ENCODE measurements at regions of chr12 and their contacts with region 1.

Region 1: DNA sequence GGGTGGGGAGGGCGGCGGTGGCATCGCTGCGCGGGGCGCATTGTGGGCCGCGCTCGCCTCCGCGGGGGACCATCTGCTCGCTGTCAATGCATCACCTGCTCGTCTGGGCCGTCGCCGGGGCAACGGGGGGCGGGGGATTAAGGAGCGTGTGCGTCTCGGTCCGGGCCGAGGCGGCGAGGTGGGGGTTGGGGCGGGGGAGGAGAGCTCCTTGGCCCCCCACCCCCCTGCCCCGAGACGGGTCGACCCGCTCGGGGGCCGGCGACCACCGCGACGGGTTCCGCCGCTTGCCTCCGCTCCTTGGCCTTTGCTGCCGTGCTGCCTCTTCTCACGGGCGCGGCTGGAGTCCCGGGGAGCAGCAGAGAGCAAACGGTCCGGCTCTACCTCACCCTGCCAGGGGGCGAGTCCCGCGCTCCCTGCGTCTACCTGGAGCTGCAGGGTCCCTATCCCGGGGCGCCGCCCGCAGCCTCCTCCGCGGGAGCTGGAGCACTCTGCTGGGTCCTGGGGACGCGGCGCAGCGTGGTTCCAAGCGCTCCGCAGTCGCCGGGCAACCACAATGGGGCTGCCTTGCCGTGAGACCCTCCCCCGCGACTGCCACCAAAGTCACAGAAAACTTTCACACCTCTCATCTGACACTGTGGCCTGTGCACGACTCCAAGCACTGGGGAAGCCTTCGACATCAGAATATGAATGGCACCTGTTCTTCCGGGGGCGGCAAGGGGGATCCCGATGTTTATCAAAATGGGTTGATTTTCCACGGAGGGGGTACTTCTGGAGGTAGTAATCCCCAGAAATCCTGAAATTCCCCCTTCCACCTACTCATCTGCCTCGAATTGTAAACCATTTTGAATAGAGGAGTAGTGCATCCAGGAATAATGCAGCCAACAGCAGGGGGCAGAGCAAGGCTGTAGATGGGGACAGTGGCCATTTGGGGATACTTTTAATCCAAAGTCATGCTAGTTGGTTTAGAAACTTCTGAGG is at the start of gene C12orf42:
- DNase-seq: peak; percentile 77
- H3K4me3 Mint-ChIP-seq: peak within 1 kb of the TSS; percentile 57
- H3K27ac Mint-ChIP-seq: no peak within 1 kb of the TSS
- H3K4me1 Mint-ChIP-seq: peaks cover 29% of the 10 kb centered on the region
- H3K27me3 Mint-ChIP-seq: peaks cover 34% of the 10 kb centered on the region
- total RNA-seq, gene C12orf42: not detected

Region 2: GRCh38 chr12:102879144-102879763 is 616.5 kb before region 1 on chr12:
- CTCF ChIA-PET with region 1: no interaction called
- intact Hi-C with region 1: loop called (anchors 1 kb)
- DNase-seq: peak; percentile 51
- H3K4me3 Mint-ChIP-seq: no peak overlapping the region
- H3K27ac Mint-ChIP-seq: no peak overlapping the region
- H3K4me1 Mint-ChIP-seq: no peaks in the 10 kb centered on the region
- H3K27me3 Mint-ChIP-seq: peaks cover 13% of the 10 kb centered on the region

Region 3: GRCh38 chr12:103279444-103279843 is 216.3 kb before region 1 on chr12:
- CTCF ChIA-PET with region 1: no interaction called
- intact Hi-C with region 1: loop called (anchors 1 kb)
- DNase-seq: no peak
- H3K4me3 Mint-ChIP-seq: no peak overlapping the region
- H3K27ac Mint-ChIP-seq: no peak overlapping the region
- H3K4me1 Mint-ChIP-seq: peaks cover 3% of the 10 kb centered on the region
- H3K27me3 Mint-ChIP-seq: peaks cover 2% of the 10 kb centered on the region

Region 4: GRCh38 chr12:103513875-103514274 is 18.1 kb after region 1 on chr12:
- CTCF ChIA-PET with region 1: no interaction called
- intact Hi-C with region 1: loop called (anchors 2 kb)
- DNase-seq: no peak
- H3K4me3 Mint-ChIP-seq: no peak overlapping the region
- H3K27ac Mint-ChIP-seq: no peak overlapping the region
- H3K4me1 Mint-ChIP-seq: peaks cover 8% of the 10 kb centered on the region
- H3K27me3 Mint-ChIP-seq: peaks cover 5% of the 10 kb centered on the region

Region 5: DNA sequence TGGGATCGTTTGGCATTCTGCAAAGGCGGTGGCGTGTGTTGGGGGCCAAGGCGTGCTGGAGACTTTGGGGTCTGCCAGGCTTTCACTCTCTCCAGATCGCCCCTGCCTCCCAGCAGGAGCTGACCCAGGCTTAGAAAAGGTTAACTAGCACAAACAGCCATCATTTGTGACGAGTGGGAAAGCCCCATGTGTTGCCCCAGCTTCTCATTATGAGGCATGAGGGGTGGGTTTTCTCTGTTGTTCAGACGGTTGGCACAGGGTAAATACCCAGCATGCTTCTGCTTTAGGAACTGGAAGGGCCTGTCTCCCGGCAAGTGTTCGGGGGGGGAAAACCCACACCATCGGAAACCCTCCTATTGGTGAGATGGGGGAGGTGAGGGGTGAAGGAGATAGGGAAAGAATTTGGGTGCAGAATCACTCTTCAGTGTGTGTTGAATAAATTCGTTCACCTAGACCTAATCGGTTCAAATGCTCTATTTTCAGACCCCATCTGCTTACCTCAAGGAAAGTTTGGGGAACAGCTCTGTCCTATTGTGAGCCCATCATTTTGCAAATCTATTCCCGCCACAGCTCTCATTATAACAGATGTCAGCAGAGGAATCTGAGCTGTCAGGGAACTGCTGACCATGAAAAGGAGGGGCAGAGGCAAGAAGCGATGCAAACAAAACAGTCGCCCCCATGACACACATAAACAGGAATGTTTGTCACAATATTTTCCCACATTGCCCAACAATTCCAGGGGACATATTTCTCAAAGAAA is 34.7 kb after region 1 on chr12:
- CTCF ChIA-PET with region 1: interaction called, 14 read pairs
- intact Hi-C with region 1: no loop called
- DNase-seq: peak; percentile 34
- H3K4me3 Mint-ChIP-seq: no peak overlapping the region
- H3K27ac Mint-ChIP-seq: no peak overlapping the region
- H3K4me1 Mint-ChIP-seq: peaks cover 7% of the 10 kb centered on the region
- H3K27me3 Mint-ChIP-seq: peaks cover 3% of the 10 kb centered on the region

Region 6: GRCh38 chr12:103632554-103633216 is 136.9 kb after region 1 on chr12:
- CTCF ChIA-PET with region 1: no interaction called
- intact Hi-C with region 1: loop called (anchors 1 kb)
- DNase-seq: peak; percentile 79
- H3K4me3 Mint-ChIP-seq: no peak overlapping the region
- H3K27ac Mint-ChIP-seq: no peak overlapping the region
- H3K4me1 Mint-ChIP-seq: no peaks in the 10 kb centered on the region
- H3K27me3 Mint-ChIP-seq: peaks cover 2% of the 10 kb centered on the region

Region 7: GRCh38 chr12:103712216-103712615 is 216.4 kb after region 1 on chr12:
- CTCF ChIA-PET with region 1: no interaction called
- intact Hi-C with region 1: no loop called
- DNase-seq: no peak
- H3K4me3 Mint-ChIP-seq: no peak overlapping the region
- H3K27ac Mint-ChIP-seq: no peak overlapping the region
- H3K4me1 Mint-ChIP-seq: no peaks in the 10 kb centered on the region
- H3K27me3 Mint-ChIP-seq: peaks cover 7% of the 10 kb centered on the region

Region 8: DNA sequence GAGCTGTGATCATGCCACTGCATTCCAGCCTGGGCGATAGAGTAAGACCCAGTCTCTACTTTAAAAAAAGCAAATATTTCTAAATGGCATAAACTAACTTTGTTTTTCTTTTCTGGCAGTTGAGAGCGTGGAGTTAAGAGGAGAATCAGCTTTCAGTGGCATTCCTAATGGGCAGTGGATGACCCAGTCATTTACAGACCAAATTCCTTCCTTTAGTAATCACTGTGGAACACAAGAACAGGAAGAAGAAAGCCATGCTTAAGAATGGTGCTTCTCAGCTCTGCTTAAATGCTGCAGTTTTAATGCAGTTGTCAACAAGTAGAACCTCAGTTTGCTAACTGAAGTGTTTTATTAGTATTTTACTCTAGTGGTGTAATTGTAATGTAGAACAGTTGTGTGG is 491.1 kb after region 1 on chr12:
- CTCF ChIA-PET with region 1: no interaction called
- intact Hi-C with region 1: no loop called
- DNase-seq: no peak
- H3K4me3 Mint-ChIP-seq: no peak overlapping the region
- H3K27ac Mint-ChIP-seq: no peak overlapping the region
- H3K4me1 Mint-ChIP-seq: no peaks in the 10 kb centered on the region
- H3K27me3 Mint-ChIP-seq: no peaks in the 10 kb centered on the region